ENCODE measurements at regions of chr11 and their contacts with region 1.

Region 1: DNA sequence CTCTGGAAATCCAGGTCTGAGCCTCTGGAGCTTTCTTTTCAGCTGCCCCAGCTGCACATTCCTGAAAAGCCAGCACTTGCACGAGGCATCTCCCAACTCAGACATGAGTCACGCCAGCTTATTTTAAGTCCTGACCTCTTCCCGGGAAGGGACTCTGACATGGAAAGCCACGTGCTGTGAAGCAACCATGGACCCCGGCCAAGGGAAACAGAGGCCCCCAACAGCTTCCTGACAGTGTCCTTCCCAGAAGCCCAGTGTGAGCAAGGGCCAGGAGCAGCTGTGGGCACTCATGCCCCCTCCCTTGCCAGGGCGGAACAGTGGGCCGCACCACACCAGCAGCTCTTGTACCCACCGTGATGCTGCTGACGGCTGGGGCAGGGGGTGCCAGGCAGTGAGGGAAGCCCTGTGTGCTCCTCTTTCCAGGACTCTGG is 118.8 kb upstream of the CADM1 start:
- DNase-seq: no peak
- H3K4me3 ChIP-seq: no peak overlapping the region
- H3K27ac ChIP-seq: no peak overlapping the region
- H3K4me1 ChIP-seq: no peaks in the 10 kb centered on the region; a peak in 1 of 7 replicates
- H3K27me3 ChIP-seq: no peaks in the 10 kb centered on the region; a peak in 1 of 7 replicates
- CTCF ChIP-seq: no peak
- EP300 ChIP-seq: no peak
- POLR2A ChIP-seq: no peak
- RAD21 ChIP-seq: no peak

Region 2: DNA sequence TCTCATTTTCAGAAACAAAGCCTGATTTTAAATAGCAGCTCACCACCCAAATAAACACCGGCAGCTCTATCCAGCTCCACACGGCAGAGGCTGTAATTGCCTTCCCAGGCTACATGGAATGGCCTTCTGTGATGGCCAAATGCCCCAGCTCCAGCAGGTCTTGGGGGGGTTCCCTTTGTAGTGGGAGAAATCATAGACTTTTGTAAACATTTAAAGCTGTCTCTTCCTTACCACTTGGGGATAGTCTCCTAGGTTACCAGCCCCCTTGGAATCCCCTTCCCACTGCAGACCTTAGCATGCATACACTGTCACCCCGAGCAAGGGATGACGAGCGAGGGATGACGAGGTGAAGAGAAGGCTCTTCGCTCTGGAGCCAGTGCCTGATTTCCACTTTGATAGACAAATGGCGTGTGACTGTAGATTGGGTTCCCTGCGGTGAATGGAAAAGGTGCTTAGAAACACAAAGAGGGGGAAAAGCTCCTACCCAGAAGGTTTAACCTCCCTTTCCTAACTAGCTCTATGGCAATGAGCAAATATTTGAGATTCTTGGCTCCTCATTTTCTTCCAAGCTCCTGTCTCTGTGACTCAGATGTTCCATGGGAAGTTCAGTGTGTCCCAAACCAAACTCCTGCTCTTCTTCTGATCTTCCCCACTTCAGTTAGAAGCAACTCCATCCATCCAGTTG is 10.8 kb before region 1 on chr11:
- CTCF ChIA-PET with region 1: interaction called, 15 read pairs
- POLR2A ChIA-PET with region 1: no interaction called
- DNase-seq: peak in 1 of 2 experiments; percentile 23
- H3K4me3 ChIP-seq: no peak overlapping the region
- H3K27ac ChIP-seq: no peak overlapping the region
- H3K4me1 ChIP-seq: peaks cover 0 to 11% (median 6%) of the 10 kb centered on the region in 4 experiments; a peak in 6 of 7 replicates
- H3K27me3 ChIP-seq: peaks cover 0 to 3% (median 0%) of the 10 kb centered on the region in 4 experiments; a peak in 2 of 7 replicates
- CTCF ChIP-seq: no peak
- EP300 ChIP-seq: no peak
- POLR2A ChIP-seq: no peak
- RAD21 ChIP-seq: no peak

Region 3: GRCh38 chr11:115644856-115645255 is 21.8 kb after region 1 on chr11:
- CTCF ChIA-PET with region 1: interaction called, 10 read pairs
- POLR2A ChIA-PET with region 1: interaction called, 4 read pairs
- DNase-seq: no peak
- H3K4me3 ChIP-seq: no peak overlapping the region
- H3K27ac ChIP-seq: no peak overlapping the region
- H3K4me1 ChIP-seq: peaks cover 0 to 9% (median 4%) of the 10 kb centered on the region in 4 experiments; a peak in 3 of 7 replicates
- H3K27me3 ChIP-seq: no peaks in the 10 kb centered on the region; a peak in 1 of 7 replicates
- CTCF ChIP-seq: no peak
- EP300 ChIP-seq: no peak
- POLR2A ChIP-seq: no peak
- RAD21 ChIP-seq: no peak

Measured in H1 (cell line).